ENCODE measurements at regions of chr10 and their contacts with region 1.

Region 1: DNA sequence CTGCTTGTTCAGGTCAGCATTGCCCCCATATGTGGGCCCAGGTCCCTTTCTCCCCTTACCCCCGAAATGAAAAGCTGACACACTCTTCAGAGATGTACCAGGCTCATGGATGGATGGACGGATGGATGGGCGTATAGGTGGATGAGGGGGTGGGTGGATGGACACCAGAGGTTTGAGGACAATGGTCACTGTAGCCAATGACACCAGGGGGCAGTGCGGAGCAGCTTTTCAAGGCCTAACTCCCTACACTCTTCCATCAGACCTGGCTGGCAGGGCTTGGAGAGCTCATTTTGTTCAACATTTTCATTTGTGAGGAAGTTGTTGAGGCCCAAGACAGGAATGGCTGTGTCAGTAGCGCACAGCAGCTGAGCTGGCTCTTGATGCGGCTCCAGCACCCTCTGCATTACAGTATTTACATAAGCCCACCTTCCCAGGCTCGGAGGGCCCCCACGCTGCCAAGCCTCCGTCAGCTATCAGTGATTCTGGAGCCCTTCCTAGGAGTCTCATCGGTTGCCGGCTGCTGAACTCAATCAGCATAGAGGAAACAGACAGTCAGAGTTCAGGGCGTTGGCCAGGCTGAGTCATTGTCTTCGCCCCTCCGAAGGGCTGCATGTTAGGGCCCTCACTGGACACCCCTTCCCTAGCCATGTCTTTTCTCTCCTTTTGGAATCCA is 11.6 kb upstream of the FFAR4 start:
- DNase-seq: peak; percentile 81
- ATAC-seq: peak; percentile 75

Region 2: GRCh38 chr10:93280699-93281366 is 274.1 kb before region 1 on chr10:
- intact Hi-C with region 1: no loop called
- DNase-seq: no peak
- ATAC-seq: no peak

Region 3: GRCh38 chr10:93591065-93591808 is 36.3 kb after region 1 on chr10:
- intact Hi-C with region 1: loop called (anchors 1 kb)
- DNase-seq: no peak
- ATAC-seq: peak; percentile 39

Region 4: DNA sequence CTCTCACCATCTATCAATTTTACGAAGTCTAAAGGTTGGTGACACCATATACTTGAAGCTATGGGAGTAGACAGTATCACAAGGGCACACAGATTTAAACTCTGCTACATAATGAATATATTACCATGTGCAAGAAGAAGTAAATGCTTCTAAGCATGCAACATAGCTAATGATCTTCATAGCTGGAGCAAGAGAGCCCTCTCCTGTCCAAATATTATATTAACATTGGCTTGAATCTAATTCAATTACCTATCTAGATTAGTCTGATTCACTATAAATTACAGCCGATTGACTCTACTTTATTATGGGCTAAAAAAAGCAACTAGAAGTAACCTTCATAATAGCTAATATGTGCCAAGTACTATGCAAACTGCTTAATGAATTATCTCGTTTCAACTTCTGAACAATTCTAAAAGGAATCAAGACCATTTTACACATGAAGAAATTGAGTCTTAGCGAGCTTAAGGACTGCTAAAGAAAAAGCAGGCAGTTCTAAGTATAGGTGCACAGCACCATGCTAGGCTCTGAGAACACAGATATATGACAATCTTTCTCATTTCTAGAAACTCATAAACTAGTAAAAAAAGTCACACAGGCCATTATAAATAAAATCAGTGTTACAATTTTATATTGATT is 125.6 kb after region 1 on chr10:
- intact Hi-C with region 1: loop called (anchors 5 kb)
- DNase-seq: no peak
- ATAC-seq: no peak

Region 5: GRCh38 chr10:93826355-93826754 is 271.5 kb after region 1 on chr10:
- intact Hi-C with region 1: no loop called
- DNase-seq: no peak
- ATAC-seq: no peak